ENCODE measurements at regions of chr4 and their contacts with region 1.

Region 1: GRCh38 chr4:4248029-4248884 is at the start of gene TMEM128:
- DNase-seq: peak; percentile 87 to 96 (median 90)
- ATAC-seq: peak; percentile 96
- H3K4me3 ChIP-seq: peak within 1 kb of the TSS; percentile 88
- H3K4me3 Mint-ChIP-seq: peak within 1 kb of the TSS; percentile 89
- H3K27ac ChIP-seq: peak within 1 kb of the TSS; percentile 83 to 94
- H3K27ac Mint-ChIP-seq: peak within 1 kb of the TSS; percentile 99
- H3K4me1 ChIP-seq: peaks cover 21% of the 10 kb centered on the region
- H3K4me1 Mint-ChIP-seq: peaks cover 40% of the 10 kb centered on the region
- H3K27me3 ChIP-seq: no peaks in the 10 kb centered on the region
- H3K27me3 Mint-ChIP-seq: peaks cover 3% of the 10 kb centered on the region
- CTCF ChIP-seq: no peak
- total RNA-seq, gene TMEM128: 6.0 to 6.9 TPM

Region 2: DNA sequence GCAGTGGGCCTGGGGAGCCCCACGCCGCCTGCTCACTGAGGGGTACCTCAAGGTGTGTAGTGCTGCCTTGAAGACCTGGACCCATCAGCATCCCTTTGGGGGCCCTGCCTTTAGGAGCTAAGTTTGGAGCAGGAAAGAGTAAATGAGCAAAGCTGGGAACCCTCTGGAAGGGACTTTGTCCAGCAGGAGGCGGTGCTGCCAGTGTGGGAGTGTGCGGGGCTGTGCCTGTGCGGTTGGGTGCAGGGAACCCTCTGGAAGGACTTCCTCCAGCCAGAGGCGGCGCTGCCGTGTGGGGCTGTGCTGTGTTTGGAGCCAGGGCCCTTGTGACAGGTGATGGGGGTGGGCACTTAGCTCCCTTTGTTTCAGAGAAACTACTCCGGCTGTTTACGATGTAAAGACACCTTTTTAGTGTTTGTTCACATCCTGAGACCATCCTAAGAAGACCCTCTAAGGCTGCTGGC is 929.7 kb before region 1 on chr4:
- CTCF ChIA-PET with region 1: no interaction called
- POLR2A ChIA-PET with region 1: no interaction called
- intact Hi-C with region 1: no loop called
- DNase-seq: no peak
- ATAC-seq: no peak
- H3K4me3 ChIP-seq: no peak overlapping the region
- H3K4me3 Mint-ChIP-seq: no peak overlapping the region
- H3K27ac ChIP-seq: no peak overlapping the region
- H3K27ac Mint-ChIP-seq: no peak overlapping the region
- H3K4me1 ChIP-seq: no peaks in the 10 kb centered on the region
- H3K4me1 Mint-ChIP-seq: peaks cover 5% of the 10 kb centered on the region
- H3K27me3 ChIP-seq: no peaks in the 10 kb centered on the region
- H3K27me3 Mint-ChIP-seq: no peaks in the 10 kb centered on the region
- CTCF ChIP-seq: no peak

Region 3: DNA sequence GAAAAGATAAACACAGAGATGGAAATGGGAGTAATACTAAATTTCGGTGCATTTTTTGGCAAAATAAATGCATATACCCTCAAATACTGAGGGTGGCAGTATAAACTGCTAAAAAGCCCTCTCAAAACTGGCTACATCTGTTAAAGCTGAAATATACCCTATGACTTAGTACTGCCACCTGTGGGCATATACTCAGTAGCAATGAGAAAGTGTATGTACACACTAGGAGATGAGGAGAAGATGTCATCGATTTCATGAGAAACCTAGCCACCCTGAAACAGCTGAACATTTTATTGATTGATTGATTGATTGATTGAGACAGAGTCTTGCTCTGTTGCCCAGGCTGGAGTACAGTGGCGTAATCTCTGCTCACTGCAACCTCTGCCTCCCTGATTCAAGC is 12.0 kb after region 1 on chr4:
- CTCF ChIA-PET with region 1: interaction called, 11 read pairs
- POLR2A ChIA-PET with region 1: interaction called, 4 read pairs
- intact Hi-C with region 1: no loop called
- DNase-seq: peak in 4 of 14 experiments; percentile 11 to 82 (median 76)
- ATAC-seq: peak; percentile 100
- H3K4me3 ChIP-seq: no peak overlapping the region
- H3K4me3 Mint-ChIP-seq: no peak overlapping the region
- H3K27ac ChIP-seq: no peak overlapping the region
- H3K27ac Mint-ChIP-seq: no peak overlapping the region
- H3K4me1 ChIP-seq: peaks cover 10% of the 10 kb centered on the region
- H3K4me1 Mint-ChIP-seq: peaks cover 7% of the 10 kb centered on the region
- H3K27me3 ChIP-seq: no peaks in the 10 kb centered on the region
- H3K27me3 Mint-ChIP-seq: no peaks in the 10 kb centered on the region
- CTCF ChIP-seq: peak; percentile 71

Region 4: DNA sequence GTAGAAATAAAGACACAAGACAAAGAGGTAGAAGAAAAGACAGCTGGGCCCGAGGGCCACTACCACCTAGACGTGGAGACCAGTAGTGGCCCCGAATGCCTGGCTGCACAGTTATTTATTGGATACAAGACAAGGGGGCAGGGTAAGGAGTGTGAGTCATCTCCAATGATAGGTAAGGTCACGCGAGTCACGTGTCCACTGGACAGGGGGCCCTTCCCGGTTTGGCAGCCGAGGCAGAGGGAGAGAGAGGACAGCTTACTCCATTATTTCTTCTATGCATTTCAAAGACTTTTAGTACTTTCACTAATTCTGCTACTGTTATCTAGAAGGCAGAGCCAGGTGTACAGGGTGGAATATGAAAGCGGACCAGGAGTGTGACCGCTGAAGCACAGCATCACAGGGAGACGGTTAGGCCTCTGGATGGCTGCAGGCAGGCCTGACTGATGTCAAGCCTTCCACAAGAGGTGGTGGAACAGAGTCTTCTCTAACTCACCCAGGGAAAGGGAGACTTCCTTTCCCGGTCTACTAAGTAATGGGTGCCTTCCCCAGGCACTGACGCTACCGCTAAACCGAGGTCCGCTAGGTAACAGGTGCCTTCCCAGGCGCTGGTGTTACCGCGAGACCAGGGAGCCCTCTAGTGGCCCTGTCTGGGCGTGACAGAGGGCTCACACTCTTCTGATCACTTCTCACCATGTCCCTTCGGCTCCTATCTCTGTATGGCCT is 86.7 kb after region 1 on chr4:
- CTCF ChIA-PET with region 1: interaction called, 3 read pairs
- POLR2A ChIA-PET with region 1: interaction called, 3 read pairs
- intact Hi-C with region 1: loop called (anchors 1 kb)
- DNase-seq: peak; percentile 59 to 88 (median 69)
- ATAC-seq: peak; percentile 90
- H3K4me3 ChIP-seq: no peak overlapping the region
- H3K4me3 Mint-ChIP-seq: no peak overlapping the region
- H3K27ac ChIP-seq: no peak overlapping the region
- H3K27ac Mint-ChIP-seq: no peak overlapping the region
- H3K4me1 ChIP-seq: peaks cover 7% of the 10 kb centered on the region
- H3K4me1 Mint-ChIP-seq: peaks cover 14% of the 10 kb centered on the region
- H3K27me3 ChIP-seq: no peaks in the 10 kb centered on the region
- H3K27me3 Mint-ChIP-seq: no peaks in the 10 kb centered on the region
- CTCF ChIP-seq: peak; percentile 81

Region 5: GRCh38 chr4:4347585-4347984 is 99.3 kb after region 1 on chr4:
- CTCF ChIA-PET with region 1: interaction called, 4 read pairs
- POLR2A ChIA-PET with region 1: interaction called, 15 read pairs
- intact Hi-C with region 1: no loop called
- DNase-seq: no peak
- ATAC-seq: no peak
- H3K4me3 ChIP-seq: no peak overlapping the region
- H3K4me3 Mint-ChIP-seq: peak overlapping the region; percentile 8
- H3K27ac ChIP-seq: no peak overlapping the region
- H3K27ac Mint-ChIP-seq: peak overlapping the region; percentile 82
- H3K4me1 ChIP-seq: peaks cover 16% of the 10 kb centered on the region
- H3K4me1 Mint-ChIP-seq: peaks cover 42% of the 10 kb centered on the region
- H3K27me3 ChIP-seq: no peaks in the 10 kb centered on the region
- H3K27me3 Mint-ChIP-seq: no peaks in the 10 kb centered on the region
- CTCF ChIP-seq: no peak

Region 6: DNA sequence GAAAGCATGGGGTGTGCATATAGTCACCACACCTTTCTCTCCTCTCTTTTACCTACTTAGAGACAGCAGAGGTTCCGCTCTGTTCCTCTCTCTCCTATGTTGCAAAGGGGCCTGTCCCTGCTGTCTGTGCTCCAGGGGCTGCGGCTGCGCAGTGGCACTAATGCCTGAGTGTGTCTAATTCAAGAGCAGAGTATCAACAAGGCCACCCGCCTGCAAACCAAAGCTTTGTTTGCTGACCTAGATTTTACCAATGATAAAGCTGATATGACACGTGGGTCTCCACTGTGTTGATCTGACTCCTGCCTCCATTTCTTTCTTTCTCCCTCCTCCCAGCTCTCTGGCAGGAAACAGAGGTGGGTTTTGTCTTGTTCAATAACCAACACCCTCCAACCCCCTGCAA is 213.6 kb after region 1 on chr4:
- CTCF ChIA-PET with region 1: no interaction called
- POLR2A ChIA-PET with region 1: interaction called, 11 read pairs
- intact Hi-C with region 1: no loop called
- DNase-seq: peak; percentile 31 to 85 (median 58)
- ATAC-seq: peak; percentile 96
- H3K4me3 ChIP-seq: peak overlapping the region; percentile 15
- H3K4me3 Mint-ChIP-seq: peak overlapping the region; percentile 50
- H3K27ac ChIP-seq: peak overlapping the region in 1 of 2 donors; percentile 70
- H3K27ac Mint-ChIP-seq: peak overlapping the region; percentile 83
- H3K4me1 ChIP-seq: peaks cover 30% of the 10 kb centered on the region
- H3K4me1 Mint-ChIP-seq: peaks cover 54% of the 10 kb centered on the region
- H3K27me3 ChIP-seq: no peaks in the 10 kb centered on the region
- H3K27me3 Mint-ChIP-seq: no peaks in the 10 kb centered on the region
- CTCF ChIP-seq: no peak

Measured in CD4-positive, alpha-beta T cell (primary cell).